Body of pancreas (tissue), 4 donors: ENCODE measurements at regions of chr5 and their contacts with region 1.

Region 1: GRCh38 chr5:169701910-169702451 is 64.9 kb downstream of the DOCK2 start:
- DNase-seq: no peak
- ATAC-seq: no peak
- H3K4me3 ChIP-seq: no peak overlapping the region
- H3K27ac ChIP-seq: no peak overlapping the region
- H3K4me1 ChIP-seq: no peaks in the 10 kb centered on the region
- H3K27me3 ChIP-seq: no peaks in the 10 kb centered on the region
- CTCF ChIP-seq: peak in 4 of 7 experiments; percentile 38 to 54 (median 46)
- POLR2A ChIP-seq: no peak

Region 2: DNA sequence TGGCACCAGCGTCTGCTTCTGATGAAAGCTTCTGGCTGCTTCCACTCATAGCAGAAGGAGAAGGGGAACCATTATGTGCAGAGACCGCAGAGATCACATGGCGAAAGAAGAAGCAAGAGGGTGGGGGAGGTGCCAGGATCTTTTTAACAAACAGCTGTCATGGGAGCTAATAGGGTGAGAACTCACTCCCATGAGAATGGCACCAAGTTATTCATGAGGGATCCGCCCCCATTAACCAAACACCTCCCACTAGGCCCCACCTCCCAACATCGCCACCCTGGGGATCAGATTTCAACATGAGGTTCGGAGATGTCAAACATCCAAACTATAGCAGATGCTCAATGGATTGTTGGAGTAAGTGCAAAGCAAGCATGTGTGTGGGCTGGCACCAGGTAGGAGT is 275.2 kb before region 1 on chr5:
- intact Hi-C with region 1: no loop called
- DNase-seq: no peak
- ATAC-seq: no peak
- H3K4me3 ChIP-seq: no peak overlapping the region
- H3K27ac ChIP-seq: no peak overlapping the region
- H3K4me1 ChIP-seq: no peaks in the 10 kb centered on the region
- H3K27me3 ChIP-seq: no peaks in the 10 kb centered on the region
- CTCF ChIP-seq: no peak
- POLR2A ChIP-seq: no peak

Region 3: DNA sequence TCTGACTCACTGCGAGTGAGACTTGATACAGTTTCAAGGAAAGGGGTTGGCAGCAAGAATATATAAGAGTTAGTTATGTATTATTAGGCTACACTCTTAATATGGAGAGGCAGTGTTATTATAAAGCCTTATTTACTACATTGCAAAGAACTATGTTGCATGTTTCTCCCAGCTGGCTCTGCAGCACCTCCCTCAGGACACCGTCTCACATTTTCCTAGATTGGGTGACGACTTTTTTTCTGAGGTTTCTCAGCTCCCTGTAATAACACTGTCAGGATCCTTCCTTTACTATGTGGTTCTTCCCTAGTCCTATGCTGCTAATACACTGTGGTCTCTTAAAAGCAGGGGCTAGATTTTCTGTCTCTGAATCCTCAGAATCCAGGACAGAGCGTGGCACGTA is 124.6 kb after region 1 on chr5:
- intact Hi-C with region 1: no loop called
- DNase-seq: no peak
- ATAC-seq: no peak
- H3K4me3 ChIP-seq: no peak overlapping the region
- H3K27ac ChIP-seq: no peak overlapping the region
- H3K4me1 ChIP-seq: no peaks in the 10 kb centered on the region
- H3K27me3 ChIP-seq: no peaks in the 10 kb centered on the region
- CTCF ChIP-seq: no peak
- POLR2A ChIP-seq: no peak

Region 4: GRCh38 chr5:169980418-169981053 is 278.6 kb after region 1 on chr5 and contains the start of gene INSYN2B:
- intact Hi-C with region 1: loop called (anchors 10 kb)
- DNase-seq: peak; percentile 52 to 74 (median 64)
- ATAC-seq: peak; percentile 83
- H3K4me3 ChIP-seq: no peak within 1 kb of the TSS
- H3K27ac ChIP-seq: no peak within 1 kb of the TSS
- H3K4me1 ChIP-seq: no peaks in the 10 kb centered on the region
- H3K27me3 ChIP-seq: no peaks in the 10 kb centered on the region
- CTCF ChIP-seq: peak; percentile 40 to 70 (median 47)
- POLR2A ChIP-seq: no peak
- total RNA-seq, gene INSYN2B: not detected